ENCODE measurements at regions of chr5 and their contacts with region 1.

Region 1: DNA sequence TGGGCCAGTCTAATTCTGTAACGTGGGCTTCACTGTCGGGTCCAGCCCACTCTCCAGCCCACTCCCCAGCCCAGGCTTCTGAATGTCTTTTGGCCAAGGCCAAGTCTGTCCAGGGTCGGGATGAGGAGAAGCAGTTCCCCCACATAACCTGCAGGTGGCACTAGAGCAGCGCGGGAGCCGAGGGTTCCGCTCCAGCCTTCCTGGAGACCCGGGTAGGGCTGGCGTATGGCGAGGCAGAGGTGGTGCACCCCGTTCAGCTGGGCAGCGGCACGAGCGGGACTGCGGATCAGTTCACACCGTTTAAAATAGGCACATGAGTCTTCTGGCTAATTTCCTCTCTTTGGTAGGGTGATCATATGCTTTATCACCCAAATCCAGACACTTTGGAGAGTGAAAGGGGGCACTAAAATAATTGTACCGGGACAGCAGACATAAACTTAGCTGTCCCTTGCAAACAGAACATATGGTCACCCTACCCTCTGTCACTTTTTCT is 185.9 kb downstream of the MSX2 start:
- DNase-seq: peak; percentile 82

Region 2: DNA sequence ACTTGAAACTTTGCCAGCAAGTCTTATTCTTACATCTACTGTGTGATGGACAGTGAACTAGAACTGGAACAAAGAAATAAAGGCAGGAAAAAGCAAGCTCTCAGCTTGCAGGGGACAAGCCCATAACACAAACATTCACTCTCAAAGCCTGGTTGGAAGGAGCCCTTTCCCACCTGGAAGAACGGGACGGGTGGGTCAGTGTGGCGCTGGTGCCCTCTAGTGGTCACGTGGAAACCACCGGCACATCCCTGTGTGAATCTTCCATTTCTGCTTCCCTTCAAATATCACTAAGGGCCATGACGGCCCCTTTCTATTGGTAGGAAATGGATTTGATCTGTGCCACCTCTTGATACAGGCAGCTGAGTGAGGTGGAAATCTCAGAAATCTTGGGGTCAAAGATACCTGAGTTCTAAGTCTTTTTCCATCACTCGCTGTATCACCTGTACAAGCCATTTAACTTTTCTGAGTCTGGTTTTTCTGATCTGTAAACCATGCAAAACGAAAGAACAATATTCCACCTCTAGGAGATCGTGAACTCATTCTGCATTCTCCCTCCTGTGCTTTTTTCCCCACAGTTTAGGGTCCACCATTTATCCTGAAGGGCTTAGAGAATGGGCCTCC is 25.7 kb after region 1 on chr5:
- intact Hi-C with region 1: loop called (anchors 2 kb)
- DNase-seq: no peak